Dorsolateral prefrontal cortex (tissue), 120 donors: ENCODE measurements at regions of chr9 and their contacts with region 1.

Region 1: GRCh38 chr9:90102292-90102901 is 497.6 kb downstream of the GADD45G start:
- DNase-seq: peak; percentile 47 to 89 (median 82)
- H3K4me3 ChIP-seq: no peak overlapping the region
- H3K27ac ChIP-seq: no peak overlapping the region
- H3K27me3 ChIP-seq: no peaks in the 10 kb centered on the region
- CTCF ChIP-seq: peak; percentile 48 to 91 (median 82)

Region 2: GRCh38 chr9:89675058-89675742 is 427.2 kb before region 1 on chr9:
- intact Hi-C with region 1: loop called in 1 of 2 experiments (anchors 5 kb)
- DNase-seq: peak in 7 of 10 donors; percentile 49 to 80 (median 65)
- H3K4me3 ChIP-seq: peak overlapping the region in 2 of 59 donors; percentile 8 to 18
- H3K27ac ChIP-seq: peak overlapping the region in 36 of 59 donors; percentile 3 to 85 (median 66)
- H3K27me3 ChIP-seq: no peaks in the 10 kb centered on the region
- CTCF ChIP-seq: peak in 1 of 56 donors; percentile 4

Region 3: GRCh38 chr9:89802781-89803355 is 299.5 kb before region 1 on chr9:
- intact Hi-C with region 1: loop called (anchors 5 to 10 kb)
- DNase-seq: peak in 3 of 10 donors; percentile 48 to 63 (median 54)
- H3K4me3 ChIP-seq: peak overlapping the region in 35 of 59 donors; percentile 1 to 57 (median 25)
- H3K27ac ChIP-seq: peak overlapping the region in 48 of 59 donors; percentile 7 to 79 (median 54)
- H3K27me3 ChIP-seq: no peaks in the 10 kb centered on the region
- CTCF ChIP-seq: no peak

Region 4: GRCh38 chr9:89808076-89808755 is 294.2 kb before region 1 on chr9:
- intact Hi-C with region 1: loop called (anchors 5 to 10 kb)
- DNase-seq: no peak
- H3K4me3 ChIP-seq: no peak overlapping the region
- H3K27ac ChIP-seq: peak overlapping the region in 1 of 59 donors; percentile 52
- H3K27me3 ChIP-seq: no peaks in the 10 kb centered on the region
- CTCF ChIP-seq: peak in 14 of 56 donors; percentile 9 to 38 (median 16)

Region 5: DNA sequence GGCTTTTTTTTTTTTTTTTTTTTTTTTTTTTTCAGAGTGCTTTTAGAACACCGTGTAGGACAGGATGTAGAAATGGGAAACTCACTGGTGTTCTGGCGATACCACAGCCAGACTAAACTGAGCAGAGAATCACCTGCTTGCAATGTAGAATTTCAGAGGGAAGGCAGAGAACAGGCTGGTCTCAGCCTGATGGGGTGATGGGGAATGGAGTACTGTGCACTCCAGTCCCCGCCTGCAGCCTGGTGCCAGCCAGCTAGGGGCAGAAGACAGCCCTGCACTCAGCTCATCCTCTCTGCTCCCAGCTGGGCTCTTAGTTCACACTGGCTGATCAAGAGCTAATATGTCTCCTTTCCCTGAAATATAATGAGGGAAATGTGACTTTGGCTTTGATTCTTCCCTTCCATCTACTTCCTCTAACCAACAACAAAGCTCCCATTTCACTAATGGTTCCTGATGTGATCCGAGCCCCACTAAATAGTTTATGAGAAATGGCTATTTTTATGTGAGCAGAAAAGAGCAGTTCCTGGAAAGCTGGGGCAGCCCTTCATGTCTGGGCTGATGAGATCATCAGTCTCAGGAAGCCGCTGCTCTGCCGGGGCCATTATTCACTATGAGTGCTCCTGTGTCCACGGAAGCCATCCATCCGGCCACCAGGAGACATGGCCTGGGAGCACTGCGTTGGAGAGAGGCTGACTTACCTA is 287.9 kb before region 1 on chr9:
- intact Hi-C with region 1: loop called (anchors 5 to 10 kb)
- DNase-seq: peak in 2 of 10 donors; percentile 27 to 28
- H3K4me3 ChIP-seq: no peak overlapping the region
- H3K27ac ChIP-seq: no peak overlapping the region
- H3K27me3 ChIP-seq: no peaks in the 10 kb centered on the region
- CTCF ChIP-seq: peak in 16 of 56 donors; percentile 13 to 37 (median 24)

Region 6: DNA sequence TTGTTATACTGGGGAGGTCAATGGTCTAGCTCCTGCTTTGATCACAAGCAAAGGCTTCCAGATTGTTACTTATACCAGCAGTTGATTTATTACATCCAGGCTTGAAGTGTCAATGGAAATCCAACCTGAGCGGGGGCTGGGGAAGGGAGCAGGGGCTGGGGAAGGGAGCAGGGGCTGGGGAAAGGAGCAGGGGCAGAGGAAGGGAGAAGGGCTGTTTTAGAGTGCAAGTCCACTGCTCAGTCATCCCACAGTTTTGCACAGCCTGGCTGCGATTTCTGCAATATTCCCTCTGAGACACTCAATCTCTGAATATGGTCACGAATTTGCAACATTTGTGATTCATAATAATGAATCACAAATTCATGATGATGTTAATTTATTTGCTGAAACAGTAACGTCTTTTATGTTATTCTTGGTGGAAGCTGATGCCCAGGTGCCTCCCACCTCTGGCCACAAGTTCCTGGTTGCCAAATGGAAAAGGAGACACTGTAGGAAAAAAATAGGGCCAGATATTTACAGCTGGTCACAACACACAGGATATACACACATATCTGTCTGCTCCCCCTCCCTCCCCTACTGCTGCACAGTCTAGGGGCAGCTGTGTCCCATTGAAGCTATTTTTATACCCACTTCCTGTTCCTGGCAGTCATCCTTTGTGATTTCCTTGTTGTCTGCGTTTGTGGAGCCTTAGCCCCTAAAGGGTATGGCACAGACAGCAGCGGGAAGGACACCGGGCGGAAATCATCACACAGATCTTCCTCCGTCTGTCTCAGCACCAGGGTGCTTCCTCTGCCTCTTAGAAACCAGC is 172.5 kb before region 1 on chr9:
- intact Hi-C with region 1: loop called in 1 of 2 experiments (anchors 10 kb)
- DNase-seq: no peak
- H3K4me3 ChIP-seq: no peak overlapping the region
- H3K27ac ChIP-seq: peak overlapping the region in 1 of 59 donors; percentile 4
- H3K27me3 ChIP-seq: no peaks in the 10 kb centered on the region
- CTCF ChIP-seq: no peak

Region 7: GRCh38 chr9:89999534-90000370 is 102.6 kb before region 1 on chr9:
- intact Hi-C with region 1: no loop called
- DNase-seq: peak in 2 of 10 donors; percentile 22 to 66
- H3K4me3 ChIP-seq: peak overlapping the region in 38 of 59 donors; percentile 0 to 47 (median 29)
- H3K27ac ChIP-seq: peak overlapping the region in 55 of 59 donors; percentile 2 to 86 (median 66)
- H3K27me3 ChIP-seq: no peaks in the 10 kb centered on the region
- CTCF ChIP-seq: peak in 1 of 56 donors; percentile 21

Region 8: DNA sequence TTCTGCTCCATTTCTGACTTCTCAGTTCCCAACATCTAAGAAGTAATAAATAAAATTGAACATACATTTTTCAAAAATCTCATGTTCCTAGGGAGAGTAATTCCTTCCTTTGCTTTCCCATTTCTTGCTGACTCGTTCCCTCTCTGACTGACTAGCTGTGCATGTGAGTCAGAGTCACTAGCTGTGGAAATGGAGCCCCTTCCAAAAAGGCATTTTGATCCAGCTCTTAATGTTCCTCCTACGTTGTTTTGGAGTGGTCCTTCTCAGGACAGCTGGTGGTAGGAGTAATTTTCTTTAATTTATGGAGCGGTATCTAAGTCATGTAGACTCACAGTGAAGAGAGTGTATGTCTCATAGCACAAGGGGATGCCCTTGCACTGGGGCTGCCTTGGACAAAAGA is 37.4 kb before region 1 on chr9:
- intact Hi-C with region 1: no loop called
- DNase-seq: no peak
- H3K4me3 ChIP-seq: no peak overlapping the region
- H3K27ac ChIP-seq: no peak overlapping the region
- H3K27me3 ChIP-seq: no peaks in the 10 kb centered on the region
- CTCF ChIP-seq: no peak